Activated CD8-positive, alpha-beta T cell treated with anti-CD3 and anti-CD28 coated beads for 36 hours (primary cell): ENCODE measurements at regions of chr10 and their contacts with region 1.

Region 1: GRCh38 chr10:103666087-103666761 is 172.7 kb downstream of the NEURL1 start:
- DNase-seq: peak; percentile 32
- ATAC-seq: no peak
- H3K4me3 Mint-ChIP-seq: no peak overlapping the region
- H3K27ac Mint-ChIP-seq: no peak overlapping the region
- H3K4me1 Mint-ChIP-seq: peaks cover 12% of the 10 kb centered on the region
- H3K27me3 Mint-ChIP-seq: no peaks in the 10 kb centered on the region
- CTCF ChIP-seq: peak; percentile 19

Region 2: DNA sequence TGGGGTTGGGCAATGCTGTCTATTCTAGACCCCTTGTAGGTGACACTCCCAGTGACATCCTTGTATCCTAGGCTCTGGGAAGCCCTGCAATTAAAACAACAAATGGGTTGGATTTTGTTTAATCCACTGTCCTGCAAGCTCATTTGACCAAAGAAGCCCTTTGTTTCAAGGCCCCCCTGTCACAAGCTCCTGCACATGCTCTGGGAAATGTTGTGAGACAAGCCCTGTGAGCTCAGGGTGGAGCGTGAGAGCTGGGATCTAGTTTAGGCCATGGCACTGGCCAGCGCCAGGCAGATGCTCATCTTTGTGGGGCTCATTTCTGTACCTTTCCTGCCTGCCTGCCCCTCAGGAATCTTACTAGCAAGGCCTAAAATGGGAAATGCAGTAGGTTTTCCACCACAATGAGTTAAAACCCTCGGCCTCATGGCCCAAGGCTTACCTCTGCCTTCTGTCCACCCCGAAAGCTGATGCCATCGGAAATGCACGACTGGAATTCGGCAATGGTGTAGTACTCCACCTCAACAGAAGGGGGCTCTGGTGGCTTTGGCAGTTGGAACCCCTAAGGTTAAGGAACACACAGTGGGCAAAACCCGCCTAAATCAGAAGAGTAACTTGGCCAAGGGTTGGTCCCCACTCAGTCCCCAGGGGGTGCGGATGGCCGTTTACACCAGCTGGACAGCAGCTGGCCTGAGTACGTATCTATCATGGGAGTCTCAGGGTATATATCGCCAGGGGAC is 60.7 kb before region 1 on chr10:
- CTCF ChIA-PET with region 1: interaction called, 11 read pairs
- POLR2A ChIA-PET with region 1: no interaction called
- intact Hi-C with region 1: no loop called
- DNase-seq: peak; percentile 58
- ATAC-seq: peak; percentile 79
- H3K4me3 Mint-ChIP-seq: no peak overlapping the region
- H3K27ac Mint-ChIP-seq: no peak overlapping the region
- H3K4me1 Mint-ChIP-seq: no peaks in the 10 kb centered on the region
- H3K27me3 Mint-ChIP-seq: no peaks in the 10 kb centered on the region
- CTCF ChIP-seq: peak; percentile 77

Region 3: DNA sequence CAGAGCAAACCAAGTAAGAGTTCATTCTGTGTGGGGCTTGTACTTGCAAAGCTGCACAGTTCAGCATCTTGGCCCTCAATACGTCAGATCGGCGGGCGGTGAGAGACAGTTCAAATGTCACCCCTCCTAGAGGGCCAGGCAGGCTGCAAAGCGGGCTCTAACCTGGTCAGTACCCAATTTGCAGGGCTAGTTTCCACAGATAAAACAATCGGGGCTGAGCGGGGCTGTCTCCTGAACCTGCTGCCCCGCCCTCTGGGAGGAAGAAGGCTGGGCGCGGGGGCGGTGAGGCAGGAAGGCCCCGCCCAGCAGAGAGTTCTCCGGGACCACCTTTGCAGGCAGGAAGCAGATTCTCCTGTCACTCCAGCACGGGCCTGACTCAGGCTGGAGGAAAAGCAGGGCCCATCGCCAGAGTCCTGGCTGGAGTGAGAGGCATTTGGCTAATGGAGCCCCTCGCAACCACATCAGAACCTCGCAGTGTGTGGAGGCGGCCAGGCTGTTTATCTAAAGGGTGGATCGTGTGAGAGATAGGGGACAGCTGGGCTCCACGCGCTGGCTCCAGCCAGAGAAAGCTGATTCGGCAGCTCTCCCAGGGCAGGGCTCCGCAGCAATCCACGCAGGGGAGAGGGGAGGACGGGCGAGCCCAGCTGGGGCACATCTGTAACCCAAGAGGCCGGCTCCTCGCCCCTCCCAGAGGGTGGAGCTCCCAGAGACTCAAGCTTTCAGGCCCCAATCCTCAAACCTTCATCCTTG is 106.0 kb after region 1 on chr10:
- CTCF ChIA-PET with region 1: no interaction called
- POLR2A ChIA-PET with region 1: no interaction called
- intact Hi-C with region 1: no loop called
- DNase-seq: peak; percentile 72
- ATAC-seq: peak; percentile 78
- H3K4me3 Mint-ChIP-seq: peak overlapping the region; percentile 77
- H3K27ac Mint-ChIP-seq: peak overlapping the region; percentile 90
- H3K4me1 Mint-ChIP-seq: peaks cover 17% of the 10 kb centered on the region
- H3K27me3 Mint-ChIP-seq: no peaks in the 10 kb centered on the region
- CTCF ChIP-seq: no peak